Motor neuron (in vitro differentiated cells): ENCODE measurements at regions of chr3 and their contacts with region 1.

Region 1: GRCh38 chr3:39707314-39707909 is 102.0 kb upstream of the MYRIP start:
- ATAC-seq: peak in 3 of 8 experiments; percentile 35 to 57 (median 38)
- H3K4me3 ChIP-seq: no peak overlapping the region
- H3K27ac ChIP-seq: no peak overlapping the region
- H3K4me1 ChIP-seq: no peaks in the 10 kb centered on the region

Region 2: GRCh38 chr3:39990532-39990931 is 283.1 kb after region 1 on chr3:
- in situ Hi-C with region 1: loop called in 1 of 9 experiments (anchors 25 kb)
- ATAC-seq: peak in 3 of 8 experiments; percentile 21 to 42 (median 24)
- H3K4me3 ChIP-seq: no peak overlapping the region
- H3K27ac ChIP-seq: no peak overlapping the region
- H3K4me1 ChIP-seq: no peaks in the 10 kb centered on the region